Mammary epithelial cell (primary cell): ENCODE measurements at regions of chr7 and their contacts with region 1.

Region 1: DNA sequence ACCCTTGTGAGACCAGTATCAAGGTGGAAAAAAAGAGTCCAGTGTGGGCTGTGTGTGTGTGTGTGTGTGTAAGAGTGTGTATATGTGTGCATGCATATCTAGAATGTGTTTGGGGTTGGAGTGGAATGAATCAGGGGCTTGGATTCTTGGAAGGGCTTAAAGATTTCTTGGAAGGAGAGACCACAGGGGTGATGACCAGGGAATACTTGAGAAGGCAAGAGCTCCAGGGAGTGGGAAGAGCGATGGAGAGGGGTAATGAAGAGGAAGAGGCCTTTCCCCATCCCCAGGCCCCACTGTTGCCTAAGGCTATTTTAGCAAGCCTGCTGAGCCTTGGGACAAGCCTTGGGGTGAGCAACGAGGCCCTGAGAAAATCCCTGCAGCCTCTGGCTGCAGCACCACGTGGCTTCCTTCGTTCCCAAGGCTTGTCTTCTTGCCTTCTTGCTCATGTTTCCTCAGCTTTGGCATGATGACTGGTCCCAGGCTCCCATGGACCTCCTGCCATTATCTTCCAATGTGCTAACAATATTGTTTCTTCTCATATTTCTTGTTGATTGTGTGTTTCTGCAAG is 663.4 kb downstream of the INHBA start:
- DNase-seq: no peak
- H3K4me3 ChIP-seq: no peak overlapping the region
- H3K27ac ChIP-seq: no peak overlapping the region
- H3K4me1 ChIP-seq: no peaks in the 10 kb centered on the region
- H3K27me3 ChIP-seq: no peaks in the 10 kb centered on the region
- CTCF ChIP-seq: no peak

Region 2: GRCh38 chr7:40990841-40991240 is 48.6 kb before region 1 on chr7:
- CTCF ChIA-PET with region 1: no interaction called
- dilution Hi-C with region 1: loop called (anchors 5 kb)
- in situ Hi-C with region 1: no loop called
- intact Hi-C with region 1: no loop called
- DNase-seq: no peak
- H3K4me3 ChIP-seq: no peak overlapping the region
- H3K27ac ChIP-seq: no peak overlapping the region
- H3K4me1 ChIP-seq: no peaks in the 10 kb centered on the region
- H3K27me3 ChIP-seq: no peaks in the 10 kb centered on the region
- CTCF ChIP-seq: no peak

Region 3: DNA sequence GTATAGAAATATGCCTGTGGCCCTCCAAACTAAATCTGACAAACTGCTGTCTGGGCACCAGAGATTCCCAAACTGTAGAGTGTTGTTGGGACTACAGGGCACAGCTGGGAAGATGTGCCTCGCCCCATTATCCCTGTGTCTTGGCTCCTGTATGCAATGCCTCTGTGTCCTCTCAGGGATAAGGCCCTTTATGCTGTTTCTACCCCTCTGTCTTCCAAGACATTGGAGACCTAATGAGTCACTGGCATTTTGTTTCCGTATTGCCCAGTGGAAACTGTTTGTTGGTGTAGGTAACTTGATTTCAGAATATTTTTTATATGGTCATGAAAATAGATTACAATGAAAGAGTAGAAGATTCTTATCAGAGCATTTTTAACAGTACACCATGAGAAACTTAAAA is 1014.4 kb after region 1 on chr7:
- CTCF ChIA-PET with region 1: no interaction called
- dilution Hi-C with region 1: no loop called
- in situ Hi-C with region 1: no loop called
- intact Hi-C with region 1: no loop called
- DNase-seq: no peak
- H3K4me3 ChIP-seq: no peak overlapping the region
- H3K27ac ChIP-seq: no peak overlapping the region
- H3K4me1 ChIP-seq: no peaks in the 10 kb centered on the region
- H3K27me3 ChIP-seq: no peaks in the 10 kb centered on the region
- CTCF ChIP-seq: no peak